Activated naive CD4-positive, alpha-beta T cell treated with anti-CD3 and anti-CD28 coated beads for 36 hours (primary cell): ENCODE measurements at regions of chr1 and their contacts with region 1.

Region 1: DNA sequence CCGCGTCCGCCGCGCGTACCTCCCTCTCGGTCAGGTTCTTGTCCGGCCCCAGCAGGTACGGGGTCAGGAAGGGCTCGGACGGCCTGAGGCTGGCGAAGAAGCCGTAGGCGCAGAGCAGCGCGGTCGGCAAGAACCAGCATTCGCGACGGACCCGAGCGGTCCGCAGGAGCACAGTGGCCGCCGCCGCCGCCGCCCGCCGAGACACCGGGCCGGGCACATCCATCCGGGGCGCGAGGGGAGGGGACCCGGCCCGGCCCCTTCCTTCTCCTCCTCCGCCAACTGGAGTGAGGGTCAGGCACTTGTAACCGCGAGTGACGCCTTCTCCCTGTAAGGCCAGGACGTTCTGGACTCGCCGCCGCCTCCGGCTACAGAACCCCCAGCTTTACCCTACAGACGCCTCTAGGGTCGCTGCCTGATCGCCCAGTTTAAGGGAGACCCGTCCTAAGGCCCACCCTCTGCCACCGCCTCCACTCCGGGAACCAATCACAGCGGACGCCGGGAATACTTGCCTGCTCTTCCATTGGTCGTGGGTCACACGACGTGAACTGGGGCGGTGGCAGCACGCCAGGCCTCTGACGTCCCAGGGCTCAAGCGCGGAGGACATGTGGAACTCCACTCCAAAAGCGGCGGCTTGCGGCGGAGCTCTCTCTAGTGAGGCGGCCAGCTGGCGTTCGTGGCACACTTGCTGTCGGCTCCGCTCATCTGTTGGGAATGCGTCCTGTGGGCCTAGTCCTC is at the start of gene SLC19A2:
- DNase-seq: peak; percentile 96
- H3K4me3 Mint-ChIP-seq: peak within 1 kb of the TSS; percentile 89
- H3K27ac Mint-ChIP-seq: peak within 1 kb of the TSS; percentile 80
- H3K4me1 Mint-ChIP-seq: peaks cover 48% of the 10 kb centered on the region
- H3K27me3 Mint-ChIP-seq: no peaks in the 10 kb centered on the region
- total RNA-seq, gene SLC19A2: 3.2 to 3.6 TPM

Region 2: GRCh38 chr1:168991667-168992475 is 493.8 kb before region 1 on chr1:
- CTCF ChIA-PET with region 1: no interaction called
- intact Hi-C with region 1: loop called (anchors 10 kb)
- DNase-seq: peak; percentile 64
- H3K4me3 Mint-ChIP-seq: no peak overlapping the region
- H3K27ac Mint-ChIP-seq: peak overlapping the region; percentile 89
- H3K4me1 Mint-ChIP-seq: peaks cover 23% of the 10 kb centered on the region
- H3K27me3 Mint-ChIP-seq: peaks cover 3% of the 10 kb centered on the region

Region 3: GRCh38 chr1:169427081-169427641 is 58.5 kb before region 1 on chr1 and contains the start of gene CCDC181:
- CTCF ChIA-PET with region 1: no interaction called
- intact Hi-C with region 1: loop called (anchors 1 kb)
- DNase-seq: peak; percentile 80
- H3K4me3 Mint-ChIP-seq: peak within 1 kb of the TSS; percentile 83
- H3K27ac Mint-ChIP-seq: no peak within 1 kb of the TSS
- H3K4me1 Mint-ChIP-seq: peaks cover 4% of the 10 kb centered on the region
- H3K27me3 Mint-ChIP-seq: peaks cover 62% of the 10 kb centered on the region
- total RNA-seq, gene CCDC181: 0.17 TPM in 1 of 2 experiments, not detected in the other

Region 4: GRCh38 chr1:169546087-169546995 is 60.6 kb after region 1 on chr1:
- CTCF ChIA-PET with region 1: interaction called, 4 read pairs
- intact Hi-C with region 1: loop called (anchors 1 kb)
- DNase-seq: peak; percentile 48
- H3K4me3 Mint-ChIP-seq: no peak overlapping the region
- H3K27ac Mint-ChIP-seq: no peak overlapping the region
- H3K4me1 Mint-ChIP-seq: no peaks in the 10 kb centered on the region
- H3K27me3 Mint-ChIP-seq: no peaks in the 10 kb centered on the region

Region 5: GRCh38 chr1:169794530-169795416 is 309.1 kb after region 1 on chr1 and contains the start of gene METTL18:
- CTCF ChIA-PET with region 1: interaction called, 3 read pairs
- intact Hi-C with region 1: loop called (anchors 1 kb)
- DNase-seq: peak; percentile 97
- H3K4me3 Mint-ChIP-seq: peak within 1 kb of the TSS; percentile 99
- H3K27ac Mint-ChIP-seq: peak within 1 kb of the TSS; percentile 99
- H3K4me1 Mint-ChIP-seq: peaks cover 48% of the 10 kb centered on the region
- H3K27me3 Mint-ChIP-seq: no peaks in the 10 kb centered on the region
- total RNA-seq, gene METTL18: 10.6 to 11.1 TPM